GM10248 (cell line): ENCODE measurements at regions of chr16 and their contacts with region 1.

Region 1: GRCh38 chr16:69754469-69755310 is at the start of gene NOB1:
- DNase-seq: peak; percentile 94
- CTCF ChIP-seq: peak; percentile 94

Region 2: GRCh38 chr16:69396187-69397061 is 358.3 kb before region 1 on chr16:
- CTCF ChIA-PET with region 1: interaction called, 49 read pairs
- POLR2A ChIA-PET with region 1: no interaction called
- DNase-seq: peak; percentile 57
- CTCF ChIP-seq: peak; percentile 38

Region 3: GRCh38 chr16:69709456-69710084 is 45.1 kb before region 1 on chr16:
- CTCF ChIA-PET with region 1: interaction called, 20 read pairs
- POLR2A ChIA-PET with region 1: no interaction called
- DNase-seq: peak; percentile 54
- CTCF ChIP-seq: peak; percentile 61

Region 4: GRCh38 chr16:69726296-69727060 is 28.2 kb before region 1 on chr16 and contains the start of gene NQO1:
- CTCF ChIA-PET with region 1: interaction called, 46 read pairs
- POLR2A ChIA-PET with region 1: interaction called, 3 read pairs
- DNase-seq: peak; percentile 97
- CTCF ChIP-seq: no peak

Region 5: GRCh38 chr16:69741919-69742904 is 12.5 kb before region 1 on chr16:
- CTCF ChIA-PET with region 1: interaction called, 19 read pairs
- POLR2A ChIA-PET with region 1: interaction called, 4 read pairs
- DNase-seq: no peak
- CTCF ChIP-seq: no peak

Region 6: GRCh38 chr16:69767459-69768229 is 13.0 kb after region 1 on chr16:
- CTCF ChIA-PET with region 1: interaction called, 14 read pairs
- POLR2A ChIA-PET with region 1: no interaction called
- DNase-seq: no peak
- CTCF ChIP-seq: no peak